ENCODE measurements at regions of chr3 and their contacts with region 1.

Region 1: DNA sequence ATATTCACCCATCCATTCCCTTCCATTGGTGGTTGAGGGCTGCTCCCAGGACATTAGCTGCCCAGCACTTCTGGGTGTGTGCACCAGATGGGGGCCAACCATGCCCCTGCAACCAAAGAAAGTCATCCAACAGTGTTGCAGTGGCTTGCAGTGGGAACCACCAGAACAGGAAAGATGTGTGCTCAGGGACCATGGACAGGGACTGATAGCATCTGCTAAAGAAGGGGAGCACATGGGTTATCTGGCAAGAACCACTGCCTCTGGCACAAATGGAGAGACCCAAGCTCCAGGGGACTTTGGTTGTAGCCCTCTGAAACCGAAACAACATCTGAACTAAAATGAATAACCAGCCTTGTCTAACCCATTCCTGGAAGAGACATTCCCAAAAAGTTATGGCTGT is 8.1 kb downstream of the DCLK3 start:
- DNase-seq: no peak
- H3K4me3 ChIP-seq: no peak overlapping the region
- H3K27ac ChIP-seq: no peak overlapping the region
- H3K4me1 ChIP-seq: no peaks in the 10 kb centered on the region
- H3K27me3 ChIP-seq: peaks cover 24% of the 10 kb centered on the region
- CTCF ChIP-seq: no peak
- EP300 ChIP-seq: no peak
- POLR2A ChIP-seq: no peak

Region 2: DNA sequence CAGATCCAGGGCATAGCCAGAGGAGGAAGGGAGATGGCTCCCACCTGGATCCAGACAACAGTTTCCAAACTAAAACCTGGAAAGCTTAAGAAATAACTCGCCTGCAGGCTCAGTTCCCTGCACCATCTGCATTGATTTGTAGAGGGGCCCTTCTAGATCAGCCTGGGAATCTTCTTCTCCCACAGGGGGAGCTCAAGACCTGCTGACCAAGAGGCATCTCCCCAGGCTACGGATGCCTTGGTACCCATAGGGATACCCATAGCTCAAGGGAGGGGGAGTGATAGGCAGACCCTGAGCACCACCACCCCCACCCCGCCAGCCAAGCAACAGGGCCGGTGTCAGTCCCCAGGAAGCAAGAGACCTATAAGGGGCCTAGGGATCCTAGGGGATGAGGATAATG is 36.1 kb after region 1 on chr3:
- in situ Hi-C with region 1: no loop called
- intact Hi-C with region 1: loop called (anchors 1 kb)
- DNase-seq: no peak
- H3K4me3 ChIP-seq: no peak overlapping the region
- H3K27ac ChIP-seq: no peak overlapping the region
- H3K4me1 ChIP-seq: no peaks in the 10 kb centered on the region
- H3K27me3 ChIP-seq: no peaks in the 10 kb centered on the region
- CTCF ChIP-seq: peak in 1 of 5 experiments; percentile 11
- EP300 ChIP-seq: no peak
- POLR2A ChIP-seq: no peak

Measured in transverse colon (tissue), 4 donors.